Right ventricle myocardium inferior (tissue), 1 donor: ENCODE measurements at regions of chr1 and their contacts with region 1.

Region 1: DNA sequence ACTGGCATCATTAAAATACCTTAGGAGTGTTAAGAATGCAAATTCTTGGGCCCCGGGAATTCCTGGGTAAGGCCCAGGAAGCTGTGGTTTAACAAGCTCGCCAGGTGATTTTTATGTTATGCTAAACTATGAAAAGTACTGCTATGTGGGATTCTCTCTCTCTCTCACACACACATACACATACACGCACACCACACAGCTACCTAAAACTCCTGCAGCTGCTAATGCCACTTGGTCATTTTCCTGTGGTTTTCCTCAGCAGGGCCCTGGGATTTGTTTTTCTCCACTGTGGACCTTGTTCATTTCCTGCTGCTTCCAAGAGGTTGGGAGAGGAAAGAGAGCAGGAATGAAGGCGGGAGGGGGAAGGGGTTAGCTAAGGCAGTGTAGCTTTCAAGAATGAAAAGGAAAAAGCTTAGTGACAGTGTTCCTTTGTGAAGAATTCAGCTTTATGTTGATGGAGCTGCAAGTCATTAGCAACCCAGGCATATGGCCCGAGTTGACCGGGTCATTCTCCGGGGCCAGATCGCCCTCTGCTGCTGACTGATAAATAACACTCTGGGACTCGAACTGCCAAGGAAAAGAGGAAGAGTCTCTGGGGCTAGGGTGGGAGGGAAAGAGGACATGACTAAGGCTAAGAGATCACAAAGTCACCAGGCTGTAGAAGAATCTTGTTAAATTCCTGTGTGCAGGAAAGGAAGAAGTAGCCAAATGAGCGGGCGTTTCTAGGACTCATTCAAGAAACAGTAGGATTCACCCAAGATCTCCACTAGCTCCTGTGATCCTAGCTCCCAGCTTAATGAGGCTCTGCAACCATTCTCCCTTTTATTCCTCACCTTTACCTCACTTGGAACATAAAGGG is 30.5 kb upstream of the LRIG2 start:
- DNase-seq: peak; percentile 79
- ATAC-seq: peak; percentile 89

Region 2: DNA sequence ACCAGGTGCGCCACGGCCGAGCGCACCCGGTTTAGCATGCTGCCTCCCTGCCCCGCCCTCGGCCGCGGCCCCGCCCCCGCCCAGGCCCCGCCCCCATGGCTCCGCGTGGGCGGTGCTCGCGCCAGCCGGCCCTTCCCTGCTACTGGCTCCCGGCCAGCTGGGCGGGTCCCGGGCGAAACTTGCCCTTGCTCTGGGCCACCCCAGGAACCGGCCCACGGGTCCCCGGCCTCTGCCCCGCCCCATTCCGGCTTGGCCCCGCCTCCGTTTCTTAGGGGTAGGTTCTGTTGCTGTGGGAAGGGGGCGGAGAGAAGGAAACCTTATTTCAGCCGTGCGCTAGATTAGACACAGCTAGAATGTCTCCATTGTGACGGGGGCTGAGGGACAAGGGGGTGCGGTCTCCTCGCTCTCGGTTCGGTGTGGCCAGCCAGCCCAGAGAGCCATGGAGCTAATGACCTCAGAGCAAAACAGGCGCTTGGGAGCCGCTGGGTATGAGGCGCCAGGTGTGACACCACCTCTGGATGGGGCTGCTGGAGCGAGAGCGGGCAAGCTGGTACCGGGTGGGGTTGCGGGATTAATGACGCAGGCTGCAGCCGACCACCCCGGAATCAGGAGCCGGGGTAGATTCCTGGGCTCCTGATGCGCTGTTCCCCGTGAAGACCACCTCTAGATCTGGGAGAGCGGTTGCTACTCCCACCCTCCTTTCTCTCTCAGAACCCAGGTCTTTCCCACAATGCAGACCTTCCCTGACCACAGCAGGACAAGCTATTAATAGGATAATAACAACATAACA is 327.1 kb before region 1 on chr1 and contains the start of gene PPM1J:
- intact Hi-C with region 1: loop called (anchors 5 kb)
- DNase-seq: peak; percentile 99
- ATAC-seq: peak; percentile 89
- total RNA-seq, gene PPM1J: 5.3 TPM

Region 3: DNA sequence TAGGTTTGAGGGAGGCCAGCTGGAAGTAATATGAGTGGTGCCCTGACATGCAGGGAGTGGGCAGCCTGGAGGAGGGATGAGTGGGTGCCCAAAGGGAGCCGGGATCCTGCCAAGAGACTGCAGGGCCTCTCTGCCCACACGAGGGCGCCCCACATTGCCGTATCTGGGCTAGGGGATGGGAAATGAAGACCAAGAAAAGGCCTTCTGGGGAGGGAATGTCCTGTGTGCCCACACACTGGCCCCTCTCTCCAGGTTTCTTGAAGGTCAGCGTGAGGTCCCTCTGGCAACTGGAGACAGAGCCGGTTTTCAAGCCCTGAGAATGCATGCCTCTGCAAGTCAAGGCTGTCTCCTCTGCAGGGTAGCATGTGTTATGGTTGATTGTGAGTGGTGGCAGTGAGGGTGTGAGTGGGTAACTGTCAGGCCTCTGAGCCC is 233.2 kb before region 1 on chr1:
- intact Hi-C with region 1: loop called (anchors 1 kb)
- DNase-seq: peak; percentile 80
- ATAC-seq: peak; percentile 77

Region 4: DNA sequence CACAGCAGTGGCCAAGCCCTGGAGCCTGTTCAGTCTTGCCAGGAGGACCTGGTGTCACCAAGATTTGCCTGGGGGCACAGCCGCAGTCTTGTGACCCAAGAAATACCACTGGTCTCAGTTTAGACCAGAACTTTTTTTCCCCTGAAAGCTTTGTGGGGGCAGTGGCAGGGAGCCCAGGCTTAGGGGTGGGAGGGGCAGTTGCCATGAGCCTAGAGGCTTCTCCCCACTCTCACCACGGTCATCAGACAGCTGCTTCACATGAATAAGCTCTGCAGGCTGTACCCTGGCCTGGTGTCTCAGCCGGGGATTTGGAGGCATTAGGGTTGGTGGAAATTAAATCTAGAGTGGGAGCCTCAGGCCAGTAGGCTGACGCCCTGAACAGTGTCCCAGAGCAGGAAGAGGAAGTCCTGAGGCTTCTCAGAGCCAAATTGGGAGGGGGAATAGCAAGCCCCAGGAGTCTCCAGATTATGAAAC is 160.2 kb before region 1 on chr1:
- intact Hi-C with region 1: loop called (anchors 1 kb)
- DNase-seq: no peak
- ATAC-seq: peak; percentile 62